Psoas muscle (tissue), 8 donors: ENCODE measurements at regions of chr18 and their contacts with region 1.

Region 1: GRCh38 chr18:21315741-21316187 is 73.7 kb downstream of the GREB1L start:
- DNase-seq: no peak
- ATAC-seq: peak in 1 of 4 donors; percentile 54
- H3K4me3 ChIP-seq: no peak overlapping the region
- H3K27ac ChIP-seq: no peak overlapping the region
- H3K4me1 ChIP-seq: no peaks in the 10 kb centered on the region
- H3K27me3 ChIP-seq: peaks cover 0 to 1% (median 0%) of the 10 kb centered on the region in 3 donors
- CTCF ChIP-seq: no peak

Region 2: GRCh38 chr18:21218630-21219261 is 97.0 kb before region 1 on chr18:
- intact Hi-C with region 1: loop called in 1 of 2 experiments (anchors 10 kb)
- DNase-seq: no peak
- ATAC-seq: no peak
- H3K4me3 ChIP-seq: no peak overlapping the region
- H3K27ac ChIP-seq: no peak overlapping the region
- H3K4me1 ChIP-seq: no peaks in the 10 kb centered on the region
- H3K27me3 ChIP-seq: no peaks in the 10 kb centered on the region
- CTCF ChIP-seq: no peak

Region 3: GRCh38 chr18:21281611-21282010 is 34.2 kb before region 1 on chr18:
- intact Hi-C with region 1: no loop called
- DNase-seq: no peak
- ATAC-seq: no peak
- H3K4me3 ChIP-seq: no peak overlapping the region
- H3K27ac ChIP-seq: no peak overlapping the region
- H3K4me1 ChIP-seq: no peaks in the 10 kb centered on the region
- H3K27me3 ChIP-seq: no peaks in the 10 kb centered on the region
- CTCF ChIP-seq: no peak

Region 4: DNA sequence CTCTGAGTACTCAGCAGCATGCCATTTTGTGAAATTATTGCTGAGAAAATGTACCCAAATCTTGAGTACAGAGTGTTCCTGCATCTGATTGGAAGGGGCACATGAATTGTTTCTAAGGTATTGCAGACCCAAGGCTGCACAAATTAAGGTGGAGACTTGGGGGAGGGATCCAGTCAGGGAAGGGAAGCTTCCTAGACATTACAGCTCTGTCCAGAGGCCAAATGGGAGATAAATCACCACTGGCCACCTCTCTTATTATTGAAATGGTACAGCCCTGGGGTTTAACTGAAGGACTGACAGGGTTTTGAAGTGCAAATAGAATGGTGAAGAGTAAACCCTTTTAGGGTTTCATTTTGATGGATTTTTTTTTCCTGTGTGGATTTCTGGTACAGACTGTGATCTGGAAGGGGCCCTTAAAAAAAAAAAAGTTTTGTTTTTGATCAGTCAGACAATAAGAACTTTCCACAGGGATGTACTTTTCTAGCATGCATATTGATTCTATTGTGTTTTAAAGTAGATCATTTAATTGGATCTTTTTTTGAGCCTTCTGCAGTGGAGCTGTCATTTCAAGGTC is 45.6 kb after region 1 on chr18:
- intact Hi-C with region 1: loop called in 1 of 2 experiments (anchors 10 kb)
- DNase-seq: no peak
- ATAC-seq: peak in 1 of 4 donors; percentile 19
- H3K4me3 ChIP-seq: no peak overlapping the region
- H3K27ac ChIP-seq: no peak overlapping the region
- H3K4me1 ChIP-seq: no peaks in the 10 kb centered on the region
- H3K27me3 ChIP-seq: peaks cover 0 to 2% (median 0%) of the 10 kb centered on the region in 3 donors
- CTCF ChIP-seq: no peak